ENCODE measurements at regions of chr3 and their contacts with region 1.

Region 1: DNA sequence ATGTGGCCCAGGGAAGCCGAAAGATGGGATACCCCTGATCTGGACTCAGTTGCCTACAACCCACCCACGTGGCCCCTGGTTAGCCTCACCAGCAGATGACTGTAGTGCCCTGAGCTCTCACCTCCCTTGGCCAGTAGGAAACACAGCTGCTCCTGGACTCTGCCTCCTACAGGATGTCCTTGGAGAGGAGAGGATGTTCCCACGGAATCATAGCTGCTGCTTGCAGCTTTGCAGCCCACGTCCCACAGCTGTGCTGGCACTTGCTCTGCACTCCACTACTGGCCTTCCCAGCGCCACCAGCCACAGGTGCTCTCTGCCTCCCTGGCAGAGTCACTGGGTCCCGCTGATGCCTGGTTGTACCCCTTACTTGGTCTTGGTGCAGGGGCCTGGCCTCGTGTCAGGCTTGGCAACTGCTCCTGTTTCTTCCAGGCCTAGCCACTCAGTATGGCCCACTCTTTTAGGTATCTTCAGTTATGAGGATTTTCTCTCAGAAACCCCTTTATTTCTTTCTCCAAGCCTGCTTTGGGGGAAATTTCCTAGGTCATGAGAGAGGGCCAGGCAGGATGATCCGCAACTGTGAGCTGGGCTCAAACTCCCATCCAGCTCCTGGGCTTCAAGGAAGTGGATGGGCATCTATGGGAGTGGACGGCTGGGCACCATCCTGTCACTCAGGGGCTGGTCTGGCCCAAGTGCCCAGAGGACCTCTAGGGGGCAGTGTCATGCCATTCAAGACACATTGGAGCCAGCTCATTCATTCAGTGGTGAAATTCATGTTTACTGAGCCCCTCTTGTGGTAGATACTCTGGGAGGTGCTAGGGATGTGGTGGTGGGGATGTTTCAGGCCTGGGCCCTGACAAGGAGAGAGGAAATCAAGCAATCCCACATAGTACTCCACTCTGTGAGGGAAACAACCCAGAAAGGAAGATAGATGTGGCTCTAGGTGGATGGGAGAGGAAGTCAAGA is 16.2 kb upstream of the VILL start:
- DNase-seq: peak; percentile 82
- H3K4me3 Mint-ChIP-seq: no peak overlapping the region
- H3K27ac Mint-ChIP-seq: no peak overlapping the region
- H3K4me1 Mint-ChIP-seq: peaks cover 6% of the 10 kb centered on the region
- H3K27me3 Mint-ChIP-seq: no peaks in the 10 kb centered on the region

Region 2: DNA sequence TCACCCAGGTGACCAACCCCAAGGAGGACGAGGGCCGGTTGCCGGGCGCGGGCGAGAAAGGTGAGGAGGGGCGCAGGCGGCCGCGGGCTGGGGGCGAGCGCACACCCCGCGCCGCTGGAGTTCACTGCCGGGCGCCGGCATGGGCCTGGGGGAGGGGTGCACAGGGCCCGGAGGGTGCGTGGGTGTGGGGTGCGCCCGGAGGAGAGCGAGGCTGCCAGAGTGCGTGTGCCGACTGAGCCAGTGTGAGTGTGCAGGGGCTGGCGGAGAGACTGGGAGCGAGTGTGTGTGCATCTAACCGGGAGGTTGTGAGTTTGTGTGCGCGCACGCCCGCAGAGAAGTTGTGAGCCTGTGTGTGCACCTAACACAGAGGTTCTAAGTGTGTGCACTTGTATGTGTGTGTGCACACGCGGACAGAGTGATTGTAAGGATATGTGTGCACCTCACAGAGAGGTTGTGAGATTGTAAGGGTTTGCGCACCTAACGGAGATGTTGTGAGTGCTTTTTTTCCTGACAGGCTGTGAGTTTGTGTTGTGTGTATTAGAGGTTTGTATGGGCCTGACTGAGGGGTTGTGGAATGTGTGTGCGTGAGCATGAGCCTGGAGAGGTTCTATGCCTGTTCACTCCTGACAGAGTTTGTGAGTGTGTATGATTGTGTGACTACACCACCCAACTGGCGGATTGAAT is 112.0 kb before region 1 on chr3:
- CTCF ChIA-PET with region 1: interaction called, 37 read pairs
- DNase-seq: peak; percentile 43
- H3K4me3 Mint-ChIP-seq: peak overlapping the region; percentile 78
- H3K27ac Mint-ChIP-seq: no peak overlapping the region
- H3K4me1 Mint-ChIP-seq: peaks cover 19% of the 10 kb centered on the region
- H3K27me3 Mint-ChIP-seq: peaks cover 46% of the 10 kb centered on the region

Region 3: DNA sequence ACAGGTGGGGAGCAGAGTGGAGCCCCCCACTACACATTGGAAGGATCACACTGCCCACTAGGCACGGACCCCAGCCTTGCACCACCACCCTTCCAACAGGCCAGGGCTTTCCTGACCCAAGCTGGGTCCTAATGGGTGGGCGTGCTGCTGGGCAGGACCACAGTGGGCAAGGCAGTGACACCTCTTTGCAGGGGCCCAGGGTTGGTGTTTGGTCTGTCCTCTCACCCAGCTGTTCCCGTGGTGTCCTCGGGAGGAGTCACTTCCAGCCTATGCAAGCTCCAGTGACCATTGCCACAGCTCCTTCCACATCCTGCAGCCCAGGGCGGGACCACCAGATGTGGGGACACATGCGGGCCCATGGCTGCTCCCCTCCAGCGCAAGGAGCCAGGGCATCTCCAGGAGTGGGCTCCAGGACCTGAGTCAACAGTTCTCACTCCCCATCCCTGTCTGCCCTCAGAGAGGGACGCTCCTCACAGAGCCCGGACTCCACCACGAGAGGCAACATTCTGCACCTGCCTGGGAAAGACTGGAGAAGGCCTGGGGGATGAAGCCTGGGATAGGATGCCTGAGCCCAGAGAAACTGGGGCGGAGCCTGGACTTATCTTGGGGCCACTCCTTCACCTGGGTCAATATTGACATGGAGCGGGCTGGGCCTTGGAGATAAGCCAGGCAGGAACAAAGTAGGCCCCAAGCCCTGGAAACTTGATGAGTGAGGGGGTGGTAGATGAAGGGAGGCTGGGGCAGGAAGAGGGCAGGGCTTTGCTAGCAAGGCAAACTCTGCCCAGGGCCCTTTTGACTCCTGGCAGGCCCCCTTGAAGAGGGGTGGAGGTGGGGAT is 12.3 kb after region 1 on chr3:
- CTCF ChIA-PET with region 1: interaction called, 17 read pairs
- DNase-seq: no peak
- H3K4me3 Mint-ChIP-seq: no peak overlapping the region
- H3K27ac Mint-ChIP-seq: no peak overlapping the region
- H3K4me1 Mint-ChIP-seq: peaks cover 3% of the 10 kb centered on the region
- H3K27me3 Mint-ChIP-seq: peaks cover 11% of the 10 kb centered on the region

Region 4: DNA sequence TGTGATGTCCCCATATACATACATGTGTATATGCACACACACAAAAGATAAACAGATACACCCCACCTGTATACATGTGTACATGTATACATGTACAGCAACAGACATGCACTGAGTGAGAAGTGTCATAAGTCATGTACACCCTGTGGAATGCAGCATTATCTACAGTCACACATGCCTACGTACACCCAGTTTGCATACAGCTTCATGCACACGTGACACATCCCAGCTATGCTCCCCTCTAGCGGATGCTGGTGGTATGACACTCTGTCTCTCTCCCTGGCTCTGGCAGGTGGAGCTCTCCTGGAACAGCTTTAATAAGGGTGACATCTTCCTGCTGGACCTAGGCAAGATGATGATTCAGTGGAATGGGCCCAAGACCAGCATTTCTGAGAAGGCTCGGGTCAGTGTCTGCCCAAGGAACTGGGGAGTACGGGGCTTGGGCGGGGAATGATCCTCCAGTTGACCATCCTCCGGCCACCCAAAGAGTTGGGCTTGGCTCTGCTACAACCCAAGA is 22.4 kb after region 1 on chr3:
- CTCF ChIA-PET with region 1: interaction called, 60 read pairs
- DNase-seq: peak; percentile 90
- H3K4me3 Mint-ChIP-seq: no peak overlapping the region
- H3K27ac Mint-ChIP-seq: peak overlapping the region; percentile 88
- H3K4me1 Mint-ChIP-seq: peaks cover 63% of the 10 kb centered on the region
- H3K27me3 Mint-ChIP-seq: peaks cover 2% of the 10 kb centered on the region

Region 5: GRCh38 chr3:38004415-38005076 is 30.1 kb after region 1 on chr3:
- CTCF ChIA-PET with region 1: interaction called, 60 read pairs
- DNase-seq: peak; percentile 75
- H3K4me3 Mint-ChIP-seq: no peak overlapping the region
- H3K27ac Mint-ChIP-seq: no peak overlapping the region
- H3K4me1 Mint-ChIP-seq: peaks cover 12% of the 10 kb centered on the region
- H3K27me3 Mint-ChIP-seq: no peaks in the 10 kb centered on the region